Right ventricle myocardium superior (tissue), 1 donor: ENCODE measurements at regions of chr6 and their contacts with region 1.

Region 1: DNA sequence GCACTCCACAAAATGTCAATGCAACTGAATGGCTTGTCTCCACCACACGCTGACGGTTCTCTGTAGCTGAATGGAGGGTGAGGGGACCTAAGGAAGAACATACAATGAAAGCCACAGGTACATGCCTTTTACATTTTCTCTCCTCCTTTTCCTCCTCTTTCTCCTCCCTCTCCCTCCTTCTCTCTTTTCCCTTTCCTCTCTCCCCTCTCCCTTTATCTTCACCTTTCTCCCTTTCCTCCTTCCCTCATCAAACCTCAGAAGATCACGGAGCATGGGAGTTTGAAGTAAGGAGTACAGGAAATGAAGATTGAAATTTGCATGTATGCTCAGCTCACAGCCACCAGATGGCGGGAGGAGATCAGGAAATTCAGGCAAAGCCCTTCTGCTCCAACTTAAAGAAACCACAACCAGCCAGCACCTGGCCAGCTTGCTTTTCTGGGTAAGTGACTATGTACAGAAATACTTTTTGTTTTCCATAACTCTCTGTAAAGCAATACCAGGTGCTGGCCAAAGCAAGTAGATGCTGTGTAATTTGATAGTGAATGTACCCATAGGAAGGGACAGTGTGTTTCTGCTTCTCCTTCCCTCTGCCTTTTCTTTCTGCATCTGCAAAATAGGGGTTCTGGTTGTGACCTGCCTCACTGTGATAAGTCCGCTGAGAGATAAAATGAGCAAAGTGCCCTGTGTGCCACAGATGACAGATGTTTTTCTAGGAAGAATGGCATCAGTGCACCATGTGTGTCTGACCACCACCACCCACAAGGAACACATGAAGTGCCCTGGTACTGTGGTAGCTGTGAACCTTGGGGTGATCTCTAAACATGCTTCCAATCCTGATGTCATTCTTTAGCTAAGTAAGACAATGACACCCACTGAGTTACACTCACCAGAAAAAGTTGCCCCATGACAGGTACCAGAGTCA is 18.6 kb upstream of the FOXO3 start:
- DNase-seq: peak; percentile 67
- ATAC-seq: peak; percentile 91

Region 2: GRCh38 chr6:108835218-108835850 is 293.2 kb after region 1 on chr6:
- intact Hi-C with region 1: loop called (anchors 2 kb)
- DNase-seq: peak; percentile 94
- ATAC-seq: peak; percentile 97

Region 3: GRCh38 chr6:108888745-108889144 is 346.6 kb after region 1 on chr6:
- intact Hi-C with region 1: loop called (anchors 5 kb)
- DNase-seq: no peak
- ATAC-seq: no peak

Region 4: DNA sequence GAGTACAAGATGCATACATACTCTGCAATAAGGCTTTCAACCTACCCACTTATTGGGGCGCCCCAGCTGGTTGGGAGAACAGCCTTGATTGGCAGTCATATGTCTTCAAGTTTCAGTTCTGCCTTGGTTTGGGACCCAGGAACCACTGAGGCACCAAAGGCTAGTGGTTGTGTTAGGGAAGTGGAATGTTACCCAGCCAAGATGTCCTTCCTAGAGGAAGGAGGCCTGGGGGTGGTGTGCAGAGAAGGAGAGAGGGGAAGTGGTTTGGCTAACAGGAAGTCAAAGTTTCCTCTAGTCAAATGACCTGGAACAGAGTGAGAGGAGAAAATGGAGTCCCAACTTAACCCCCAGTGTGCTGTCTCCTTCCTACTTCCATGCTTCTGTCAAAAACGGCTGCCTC is 780.7 kb after region 1 on chr6:
- intact Hi-C with region 1: no loop called
- DNase-seq: peak; percentile 53
- ATAC-seq: peak; percentile 70